ENCODE measurements at regions of chr16 and their contacts with region 1.

Region 1: DNA sequence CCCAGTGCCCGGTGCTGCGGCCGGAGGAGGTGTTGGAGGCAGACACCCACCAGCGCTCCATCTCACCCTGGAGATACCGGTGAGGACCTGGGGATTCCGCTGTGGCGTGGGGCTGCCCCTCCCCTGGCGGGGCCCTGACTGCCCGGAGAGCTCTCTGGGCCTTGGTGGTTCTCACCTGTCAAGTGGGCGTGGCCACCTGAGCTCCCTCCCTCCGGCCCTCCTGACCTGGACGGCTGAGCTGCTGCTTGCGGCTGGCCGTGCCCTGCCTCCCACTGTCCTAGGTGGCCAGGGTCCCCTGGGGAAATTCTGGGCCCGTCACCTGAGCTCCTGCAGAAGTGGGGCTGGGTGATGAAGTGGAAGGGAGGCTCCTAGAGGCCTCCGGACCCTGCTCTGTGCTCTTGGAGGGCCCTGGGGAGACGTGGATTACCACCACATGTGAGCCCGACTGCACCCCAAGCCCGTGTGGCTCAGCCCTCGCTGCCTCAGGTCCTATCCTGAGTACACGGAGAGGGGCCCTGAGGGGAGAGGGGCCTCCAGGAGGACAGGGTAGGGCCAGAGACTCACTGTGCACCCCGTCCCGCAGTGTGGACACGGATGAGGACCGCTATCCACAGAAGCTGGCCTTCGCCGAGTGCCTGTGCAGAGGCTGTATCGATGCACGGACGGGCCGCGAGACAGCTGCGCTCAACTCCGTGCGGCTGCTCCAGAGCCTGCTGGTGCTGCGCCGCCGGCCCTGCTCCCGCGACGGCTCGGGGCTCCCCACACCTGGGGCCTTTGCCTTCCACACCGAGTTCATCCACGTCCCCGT is 1.1 kb downstream of the IL17C start:
- DNase-seq: no peak
- ATAC-seq: no peak
- H3K4me3 Mint-ChIP-seq: no peak overlapping the region
- H3K27ac Mint-ChIP-seq: no peak overlapping the region
- H3K4me1 Mint-ChIP-seq: peaks cover 39% of the 10 kb centered on the region
- H3K27me3 Mint-ChIP-seq: peaks cover 25% of the 10 kb centered on the region

Region 2: GRCh38 chr16:88650749-88651275 is 11.4 kb after region 1 on chr16 and contains the start of gene CYBA:
- CTCF ChIA-PET with region 1: no interaction called
- POLR2A ChIA-PET with region 1: interaction called, 12 read pairs
- DNase-seq: peak; percentile 93
- ATAC-seq: peak; percentile 93
- H3K4me3 Mint-ChIP-seq: peak within 1 kb of the TSS; percentile 93
- H3K27ac Mint-ChIP-seq: peak within 1 kb of the TSS; percentile 94
- H3K4me1 Mint-ChIP-seq: peaks cover 26% of the 10 kb centered on the region
- H3K27me3 Mint-ChIP-seq: no peaks in the 10 kb centered on the region
- total RNA-seq, gene CYBA: 568 to 599 TPM